Activated T-helper 2 cell treated with anti-CD3 and anti-CD28 coated beads, Interferon-gamma antibody, Interleukin-2, Interleukin-4, amounts not matched to agents 10 μg/mL and 5 μg/mL and 100 μg/mL, durations not matched to agents 14 hours and 24 hours and 36 hours (primary cell): ENCODE measurements at regions of chr1 and their contacts with region 1.

Region 1: DNA sequence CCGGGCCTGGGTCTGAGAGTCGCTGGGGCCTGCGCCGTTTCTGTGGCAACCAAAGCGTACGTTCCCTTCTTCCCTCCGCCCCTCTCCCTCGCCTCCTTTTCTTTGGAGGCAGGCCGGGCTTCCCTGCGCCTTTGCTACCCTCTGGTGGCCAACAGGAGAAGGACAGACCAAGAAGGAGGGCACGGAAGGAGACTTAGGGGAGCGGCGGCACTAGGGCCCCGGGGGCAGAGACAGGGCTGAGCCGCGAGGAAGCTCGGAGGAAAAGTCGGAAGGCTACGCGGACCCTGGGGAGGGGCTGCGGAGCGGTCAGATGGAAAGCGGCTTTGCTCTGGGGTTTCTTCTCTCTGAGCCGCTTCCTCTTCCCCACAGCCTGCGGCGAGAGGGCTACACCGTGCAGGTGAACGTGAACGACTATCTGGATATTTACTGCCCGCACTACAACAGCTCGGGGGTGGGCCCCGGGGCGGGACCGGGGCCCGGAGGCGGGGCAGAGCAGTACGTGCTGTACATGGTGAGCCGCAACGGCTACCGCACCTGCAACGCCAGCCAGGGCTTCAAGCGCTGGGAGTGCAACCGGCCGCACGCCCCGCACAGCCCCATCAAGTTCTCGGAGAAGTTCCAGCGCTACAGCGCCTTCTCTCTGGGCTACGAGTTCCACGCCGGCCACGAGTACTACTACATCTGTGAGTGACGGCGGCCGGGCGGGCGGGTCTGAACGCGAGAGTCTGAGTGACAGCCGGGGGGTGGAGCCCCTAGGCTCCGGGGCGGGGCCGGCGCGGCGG is 6.3 kb downstream of the EFNA3 start:
- DNase-seq: peak; percentile 90
- H3K4me3 Mint-ChIP-seq: peak overlapping the region; percentile 82
- H3K27ac Mint-ChIP-seq: peak overlapping the region; percentile 88
- H3K4me1 Mint-ChIP-seq: peaks cover 31% of the 10 kb centered on the region
- H3K27me3 Mint-ChIP-seq: peaks cover 28% of the 10 kb centered on the region

Region 2: DNA sequence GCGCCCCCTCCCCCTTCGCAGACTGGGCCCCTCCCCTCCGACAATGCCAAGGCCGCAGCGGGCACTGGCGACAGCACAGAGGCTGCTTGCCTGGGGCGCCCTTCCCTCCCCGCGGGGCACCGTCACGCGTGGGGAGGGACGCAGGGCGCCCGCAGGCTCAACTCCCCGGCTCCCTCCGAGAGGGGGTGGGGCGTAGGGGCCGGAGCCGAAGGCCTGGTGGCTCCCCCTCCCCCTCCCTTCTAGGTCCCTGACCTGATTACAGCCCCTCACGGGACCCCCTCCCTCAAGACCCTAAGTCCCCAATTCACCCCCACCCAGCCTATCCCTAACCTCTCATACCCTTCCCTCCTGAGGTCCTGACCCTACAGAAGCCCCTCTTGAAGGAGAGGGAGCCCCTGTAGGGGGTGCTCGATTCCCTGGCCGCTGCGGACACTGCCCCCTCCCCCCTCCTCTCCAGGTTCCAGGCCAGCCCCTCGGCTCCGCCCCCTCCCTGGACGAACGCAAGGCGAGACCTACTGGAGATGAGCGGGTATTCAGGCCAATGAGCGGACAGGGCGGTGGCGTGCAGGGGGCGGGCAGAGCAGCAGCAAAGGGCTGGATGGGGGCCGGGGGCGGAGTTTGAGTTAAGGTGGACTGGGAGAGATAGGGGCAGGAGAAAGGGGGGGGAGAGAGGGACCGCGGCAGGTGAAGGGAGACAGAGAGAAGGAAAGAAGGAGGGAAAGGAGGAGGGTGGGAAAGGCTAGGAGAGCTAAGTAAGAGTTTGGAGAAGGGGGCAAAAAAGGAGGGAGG is 83.0 kb before region 1 on chr1:
- intact Hi-C with region 1: loop called (anchors 5 kb)
- DNase-seq: peak; percentile 98
- H3K4me3 Mint-ChIP-seq: peak overlapping the region; percentile 97
- H3K27ac Mint-ChIP-seq: peak overlapping the region; percentile 97
- H3K4me1 Mint-ChIP-seq: peaks cover 47% of the 10 kb centered on the region
- H3K27me3 Mint-ChIP-seq: no peaks in the 10 kb centered on the region

Region 3: DNA sequence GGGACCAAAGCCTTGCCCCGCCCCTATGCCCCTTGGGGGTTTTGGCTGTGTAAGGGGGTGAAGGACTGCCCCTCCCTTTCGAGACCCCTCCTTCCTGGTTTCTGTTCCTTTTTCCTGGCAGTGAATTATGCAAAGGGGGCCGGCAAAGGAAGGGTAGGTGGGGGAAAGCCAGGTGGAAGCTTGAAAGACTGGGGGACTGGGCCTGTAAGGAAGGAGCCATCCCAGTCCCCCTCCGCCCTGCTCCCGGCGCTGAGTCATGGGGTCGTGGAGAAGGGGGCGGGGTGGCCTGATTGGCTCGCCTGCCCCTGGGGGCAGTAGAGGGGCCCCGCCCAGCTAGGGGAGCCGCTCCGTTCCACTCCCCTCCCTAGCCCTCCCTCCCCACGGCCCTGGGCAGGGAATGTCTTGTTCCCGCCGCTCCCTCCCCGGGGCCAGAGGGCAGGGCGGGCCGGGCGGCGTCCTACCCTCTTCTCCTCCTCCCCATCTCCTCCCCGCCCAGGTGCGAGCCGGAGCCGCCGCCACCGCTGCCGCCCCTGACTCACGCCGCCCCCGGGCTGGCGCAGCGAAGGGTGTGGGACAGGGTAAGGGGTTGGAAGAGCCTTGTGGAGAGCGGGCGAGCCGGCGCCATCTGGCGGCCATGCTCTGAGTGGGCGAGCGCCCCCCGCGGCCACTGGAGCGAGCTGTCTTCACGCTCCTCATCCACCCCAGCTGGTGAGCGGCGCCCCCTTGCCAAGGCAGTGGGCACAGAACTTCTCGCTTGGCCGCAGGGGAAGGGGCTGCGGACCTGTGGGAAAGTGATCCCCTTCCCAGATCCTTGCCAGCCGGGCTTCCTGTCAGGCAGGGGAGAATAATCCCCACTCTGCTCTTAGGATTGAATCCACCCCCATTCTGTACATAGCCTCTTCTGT is 67.6 kb before region 1 on chr1:
- intact Hi-C with region 1: loop called (anchors 2 kb)
- DNase-seq: peak; percentile 82
- H3K4me3 Mint-ChIP-seq: no peak overlapping the region
- H3K27ac Mint-ChIP-seq: peak overlapping the region; percentile 22
- H3K4me1 Mint-ChIP-seq: peaks cover 51% of the 10 kb centered on the region
- H3K27me3 Mint-ChIP-seq: no peaks in the 10 kb centered on the region

Region 4: GRCh38 chr1:155050560-155051341 is 34.2 kb before region 1 on chr1 and contains the start of gene ADAM15:
- intact Hi-C with region 1: loop called (anchors 1 kb)
- DNase-seq: peak; percentile 75
- H3K4me3 Mint-ChIP-seq: peak within 1 kb of the TSS; percentile 84
- H3K27ac Mint-ChIP-seq: peak within 1 kb of the TSS; percentile 79
- H3K4me1 Mint-ChIP-seq: peaks cover 24% of the 10 kb centered on the region
- H3K27me3 Mint-ChIP-seq: no peaks in the 10 kb centered on the region
- total RNA-seq, gene ADAM15: 72.0 and 74.8 TPM in 2 replicates

Region 5: GRCh38 chr1:155063550-155064110 is 21.3 kb before region 1 on chr1 and contains the start of gene EFNA4:
- intact Hi-C with region 1: loop called (anchors 1 kb)
- DNase-seq: peak; percentile 84
- H3K4me3 Mint-ChIP-seq: peak within 1 kb of the TSS; percentile 96
- H3K27ac Mint-ChIP-seq: peak within 1 kb of the TSS; percentile 68
- H3K4me1 Mint-ChIP-seq: peaks cover 21% of the 10 kb centered on the region
- H3K27me3 Mint-ChIP-seq: no peaks in the 10 kb centered on the region
- total RNA-seq, gene EFNA4: 9.2 and 10.5 TPM in 2 replicates

Region 6: GRCh38 chr1:155070721-155071569 is 14.0 kb before region 1 on chr1:
- intact Hi-C with region 1: loop called (anchors 2 kb)
- DNase-seq: peak; percentile 70
- H3K4me3 Mint-ChIP-seq: peak overlapping the region; percentile 8
- H3K27ac Mint-ChIP-seq: no peak overlapping the region
- H3K4me1 Mint-ChIP-seq: peaks cover 26% of the 10 kb centered on the region
- H3K27me3 Mint-ChIP-seq: peaks cover 9% of the 10 kb centered on the region

Region 7: DNA sequence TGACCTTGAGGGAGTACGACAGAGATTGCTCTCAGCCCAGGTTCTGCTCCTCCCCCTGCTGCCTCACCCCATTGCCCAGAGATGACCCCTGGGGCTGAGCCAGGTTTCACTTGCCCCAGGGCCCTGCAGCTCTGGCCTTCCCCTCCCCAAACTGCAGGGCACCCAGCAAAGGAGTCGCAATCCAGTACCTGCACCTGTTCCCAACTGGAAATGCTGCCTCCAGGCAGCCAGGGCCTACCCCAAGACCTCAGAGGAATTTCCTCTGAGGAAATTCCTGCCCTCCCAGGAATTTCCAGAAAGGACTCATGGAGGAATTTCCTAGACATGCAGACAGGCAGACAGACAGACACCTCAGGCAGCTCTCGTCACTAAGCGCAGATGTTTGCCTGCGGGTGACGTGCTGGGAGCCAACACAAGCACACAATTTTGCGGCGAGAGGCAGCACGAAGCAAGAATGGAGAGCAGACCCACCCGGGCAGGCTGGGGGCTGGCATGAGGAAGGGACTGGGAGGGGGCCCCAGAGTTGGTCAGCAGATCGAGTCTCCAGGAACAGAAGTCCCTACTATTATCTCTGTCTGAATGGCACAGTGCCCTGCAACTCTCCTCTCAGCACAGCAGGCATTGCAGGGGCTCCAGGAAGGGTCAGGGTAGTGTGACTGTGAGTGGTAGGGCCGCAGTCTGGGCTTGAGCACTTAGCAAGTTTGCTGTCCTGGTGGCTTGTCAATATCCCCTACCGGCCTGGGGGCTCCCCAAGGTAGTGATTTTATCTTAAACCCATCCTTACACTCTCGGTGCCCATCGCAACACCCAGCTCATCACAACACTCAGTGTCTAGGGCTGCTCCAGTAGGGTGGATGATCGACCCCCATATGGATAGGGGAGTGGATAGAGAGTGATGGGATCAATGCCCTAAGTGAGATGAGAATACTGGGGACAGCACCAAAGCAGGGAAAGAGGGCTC is 39.9 kb after region 1 on chr1:
- intact Hi-C with region 1: no loop called
- DNase-seq: no peak
- H3K4me3 Mint-ChIP-seq: no peak overlapping the region
- H3K27ac Mint-ChIP-seq: no peak overlapping the region
- H3K4me1 Mint-ChIP-seq: peaks cover 18% of the 10 kb centered on the region
- H3K27me3 Mint-ChIP-seq: peaks cover 55% of the 10 kb centered on the region

Region 8: GRCh38 chr1:155135415-155136028 is 50.6 kb after region 1 on chr1 and contains the start of gene SLC50A1:
- intact Hi-C with region 1: loop called (anchors 2 kb)
- DNase-seq: peak; percentile 92
- H3K4me3 Mint-ChIP-seq: peak within 1 kb of the TSS; percentile 91
- H3K27ac Mint-ChIP-seq: peak within 1 kb of the TSS; percentile 97
- H3K4me1 Mint-ChIP-seq: peaks cover 32% of the 10 kb centered on the region
- H3K27me3 Mint-ChIP-seq: peaks cover 2% of the 10 kb centered on the region
- total RNA-seq, gene SLC50A1: 56.9 and 58.0 TPM in 2 replicates

Region 9: GRCh38 chr1:155522069-155522468 is 437.2 kb after region 1 on chr1:
- intact Hi-C with region 1: no loop called
- DNase-seq: no peak
- H3K4me3 Mint-ChIP-seq: no peak overlapping the region
- H3K27ac Mint-ChIP-seq: no peak overlapping the region
- H3K4me1 Mint-ChIP-seq: peaks cover 19% of the 10 kb centered on the region
- H3K27me3 Mint-ChIP-seq: no peaks in the 10 kb centered on the region